ENCODE measurements at regions of chr4 and their contacts with region 1.

Region 1: DNA sequence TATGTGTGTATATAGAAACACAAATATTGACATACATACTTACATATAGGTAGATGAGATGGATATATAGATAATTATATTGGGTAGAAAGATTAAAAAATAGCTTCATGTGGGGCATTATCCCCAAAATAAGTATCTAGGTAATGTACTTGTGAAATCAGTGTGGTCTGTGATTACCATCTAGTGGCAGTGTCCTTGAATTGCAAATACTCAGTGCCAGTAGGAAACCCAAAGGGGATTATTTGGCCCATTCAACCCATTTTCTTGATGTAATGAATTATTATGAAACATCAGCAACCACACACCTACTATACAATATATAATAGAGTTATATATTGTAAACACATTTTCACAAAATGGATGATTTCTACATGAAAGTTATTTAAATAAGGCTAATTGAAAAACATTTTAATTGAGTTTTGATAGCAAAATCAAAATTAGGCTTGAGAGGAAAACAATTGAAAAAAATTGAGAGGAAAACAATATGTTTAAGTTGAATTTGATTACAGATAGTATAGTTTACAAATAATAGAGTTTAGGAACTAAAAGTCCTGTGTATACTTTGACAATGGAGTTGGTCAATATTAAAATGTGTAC is 389.4 kb downstream of the GALNTL6 start:
- DNase-seq: no peak
- ATAC-seq: no peak

Region 2: GRCh38 chr4:170242471-170242870 is 1960.1 kb before region 1 on chr4:
- intact Hi-C with region 1: loop called (anchors 10 kb)
- DNase-seq: no peak
- ATAC-seq: no peak

Region 3: DNA sequence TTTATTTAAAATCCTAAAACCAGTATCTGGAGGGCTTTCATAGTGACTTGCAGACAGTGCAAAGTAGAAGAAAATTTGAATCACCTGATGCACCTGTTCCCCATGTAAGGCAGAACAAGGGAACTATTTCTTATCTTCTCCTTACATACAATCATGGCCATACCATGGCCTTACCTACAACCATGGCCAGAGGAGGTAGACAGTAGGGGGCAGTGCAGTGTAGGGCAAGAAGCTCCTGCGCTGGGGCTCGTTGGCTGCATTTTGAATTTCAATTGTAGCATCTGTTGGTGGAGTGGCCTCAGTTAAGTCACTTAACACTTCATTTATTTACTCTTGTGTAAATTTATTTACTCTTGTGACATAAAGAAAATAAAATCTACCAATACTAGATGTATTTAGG is 356.3 kb before region 1 on chr4:
- intact Hi-C with region 1: loop called (anchors 5 kb)
- DNase-seq: no peak
- ATAC-seq: no peak

Region 4: GRCh38 chr4:172157946-172158345 is 44.6 kb before region 1 on chr4:
- intact Hi-C with region 1: no loop called
- DNase-seq: no peak
- ATAC-seq: no peak

Region 5: GRCh38 chr4:172169871-172170270 is 32.7 kb before region 1 on chr4:
- intact Hi-C with region 1: no loop called
- DNase-seq: no peak
- ATAC-seq: no peak

Region 6: DNA sequence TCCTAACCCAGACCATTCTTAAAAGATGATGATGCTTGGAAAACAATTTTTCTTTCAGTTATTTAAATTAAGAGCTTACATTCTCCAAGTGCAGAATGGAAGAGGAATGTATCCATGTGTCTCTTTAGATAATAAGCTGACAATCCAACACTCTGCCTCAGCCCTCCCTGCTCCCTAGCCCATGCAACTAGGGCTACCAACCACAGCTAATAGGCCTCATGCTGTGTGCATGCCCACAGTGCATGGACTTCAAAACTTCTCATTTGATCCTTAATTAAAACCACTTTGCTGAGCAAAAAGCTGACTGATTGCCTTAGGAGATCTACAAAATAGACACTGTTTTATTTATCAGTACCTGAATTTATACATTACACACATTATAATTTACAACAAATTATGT is 84.5 kb after region 1 on chr4:
- intact Hi-C with region 1: no loop called
- DNase-seq: no peak
- ATAC-seq: no peak